Dorsolateral prefrontal cortex (tissue), 120 donors: ENCODE measurements at regions of chr2 and their contacts with region 1.

Region 1: DNA sequence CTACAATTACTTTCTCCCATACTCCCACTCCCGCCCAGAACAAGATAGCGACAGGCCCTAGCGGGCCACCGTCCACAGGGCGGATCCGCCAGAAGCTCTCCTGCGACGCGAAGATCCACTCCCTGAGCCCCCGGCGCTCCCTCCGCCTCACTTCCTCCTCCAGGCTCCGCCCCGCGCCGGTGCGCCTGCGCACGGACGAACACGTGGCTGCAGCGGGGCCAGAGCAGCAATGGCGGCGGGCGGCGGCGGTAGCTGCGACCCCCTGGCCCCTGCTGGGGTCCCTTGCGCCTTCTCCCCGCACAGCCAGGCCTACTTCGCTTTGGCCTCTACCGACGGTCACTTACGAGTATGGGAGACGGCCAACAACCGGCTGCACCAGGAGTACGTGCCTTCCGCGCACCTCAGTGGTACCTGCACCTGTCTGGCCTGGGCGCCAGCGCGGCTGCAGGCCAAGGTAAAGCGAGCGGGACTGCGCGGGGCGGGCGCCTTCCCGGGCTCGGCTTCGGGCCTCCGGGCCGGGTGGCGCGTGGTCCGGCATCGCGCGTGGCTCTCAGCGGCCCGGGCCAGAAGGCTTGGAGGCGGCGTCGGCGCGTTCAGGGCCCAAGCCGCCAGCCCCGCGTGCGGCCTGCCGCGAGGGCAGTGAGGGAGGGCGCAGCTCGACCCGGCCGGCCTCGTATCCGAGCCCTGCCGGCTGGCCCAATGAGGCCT is at the start of gene WDR43:
- DNase-seq: peak; percentile 94 to 99 (median 96)
- H3K4me3 ChIP-seq: peak within 1 kb of the TSS; percentile 68 to 100 (median 99)
- H3K27ac ChIP-seq: peak within 1 kb of the TSS in 46 of 59 donors; percentile 2 to 88 (median 66)
- H3K27me3 ChIP-seq: no peaks in the 10 kb centered on the region
- CTCF ChIP-seq: peak in 28 of 56 donors; percentile 7 to 49 (median 26)
- total RNA-seq, gene WDR43: 20.4 to 54.5 (median 32.7) TPM

Region 2: DNA sequence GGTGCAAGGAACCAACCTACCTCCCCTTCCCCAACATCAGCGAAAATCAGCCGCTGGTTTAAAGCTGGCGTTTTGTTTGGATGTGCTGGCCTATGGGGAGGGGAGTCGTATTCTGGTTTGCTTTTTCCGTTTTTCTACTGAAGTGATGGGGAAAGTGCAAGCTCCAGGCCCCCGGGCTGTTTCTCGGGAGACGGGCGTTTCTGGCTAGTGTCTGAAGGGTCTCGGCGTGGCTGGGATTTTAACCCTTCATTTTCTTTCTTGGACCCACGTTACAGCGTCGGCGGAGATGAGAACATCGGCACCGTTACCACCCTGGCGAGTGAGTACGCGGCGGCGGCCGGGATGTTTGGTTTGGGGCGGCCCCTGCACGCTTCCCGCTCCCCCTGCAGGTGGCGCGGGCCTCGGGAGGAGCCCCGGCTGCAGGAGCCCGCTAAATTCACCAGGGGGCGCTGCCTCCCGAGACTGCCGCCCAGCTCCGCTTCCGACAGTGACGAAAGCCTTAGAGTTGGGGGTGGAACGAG is 328.0 kb before region 1 on chr2:
- intact Hi-C with region 1: loop called (anchors 5 to 10 kb)
- DNase-seq: peak; percentile 66 to 89 (median 79)
- H3K4me3 ChIP-seq: peak overlapping the region; percentile 36 to 88 (median 71)
- H3K27ac ChIP-seq: peak overlapping the region in 57 of 59 donors; percentile 52 to 94 (median 84)
- H3K27me3 ChIP-seq: no peaks in the 10 kb centered on the region
- CTCF ChIP-seq: peak; percentile 92 to 100 (median 98)

Region 3: DNA sequence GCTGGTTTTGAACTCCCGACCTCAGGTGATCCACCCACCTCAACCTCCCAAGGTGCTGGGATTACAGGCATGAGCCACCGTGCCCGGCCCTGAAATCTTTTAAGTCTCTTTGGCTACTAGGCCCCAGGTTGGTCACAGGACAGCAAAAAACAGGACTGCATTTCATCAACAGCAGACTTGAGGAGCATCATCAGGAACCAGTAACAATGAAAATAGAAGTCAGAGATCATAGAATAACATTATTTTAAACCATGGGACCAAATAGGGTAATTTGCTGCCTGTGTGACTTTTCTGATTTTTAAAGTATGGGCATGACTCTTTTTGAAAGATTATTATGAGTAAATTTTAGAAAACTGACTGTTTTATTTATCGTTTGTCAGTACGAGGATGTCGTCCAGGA is 118.2 kb before region 1 on chr2:
- intact Hi-C with region 1: no loop called
- DNase-seq: no peak
- H3K4me3 ChIP-seq: no peak overlapping the region
- H3K27ac ChIP-seq: peak overlapping the region in 2 of 59 donors; percentile 7 to 10
- H3K27me3 ChIP-seq: no peaks in the 10 kb centered on the region
- CTCF ChIP-seq: no peak

Region 4: GRCh38 chr2:28870146-28870891 is 24.3 kb before region 1 on chr2 and contains the start of gene TRMT61B:
- intact Hi-C with region 1: loop called (anchors 1 kb)
- DNase-seq: peak; percentile 91 to 98 (median 96)
- H3K4me3 ChIP-seq: peak within 1 kb of the TSS; percentile 62 to 100 (median 93)
- H3K27ac ChIP-seq: peak within 1 kb of the TSS in 51 of 59 donors; percentile 1 to 91 (median 68)
- H3K27me3 ChIP-seq: no peaks in the 10 kb centered on the region
- CTCF ChIP-seq: peak in 38 of 56 donors; percentile 5 to 58 (median 36)
- total RNA-seq, gene TRMT61B: 15.0 to 32.6 (median 21.0) TPM

Region 5: GRCh38 chr2:29212009-29212408 is 317.4 kb after region 1 on chr2:
- intact Hi-C with region 1: no loop called
- DNase-seq: peak in 1 of 10 donors; percentile 8
- H3K4me3 ChIP-seq: no peak overlapping the region
- H3K27ac ChIP-seq: no peak overlapping the region
- H3K27me3 ChIP-seq: no peaks in the 10 kb centered on the region
- CTCF ChIP-seq: no peak